A549 (cell line): ENCODE measurements at regions of chr17 and their contacts with region 1.

Region 1: DNA sequence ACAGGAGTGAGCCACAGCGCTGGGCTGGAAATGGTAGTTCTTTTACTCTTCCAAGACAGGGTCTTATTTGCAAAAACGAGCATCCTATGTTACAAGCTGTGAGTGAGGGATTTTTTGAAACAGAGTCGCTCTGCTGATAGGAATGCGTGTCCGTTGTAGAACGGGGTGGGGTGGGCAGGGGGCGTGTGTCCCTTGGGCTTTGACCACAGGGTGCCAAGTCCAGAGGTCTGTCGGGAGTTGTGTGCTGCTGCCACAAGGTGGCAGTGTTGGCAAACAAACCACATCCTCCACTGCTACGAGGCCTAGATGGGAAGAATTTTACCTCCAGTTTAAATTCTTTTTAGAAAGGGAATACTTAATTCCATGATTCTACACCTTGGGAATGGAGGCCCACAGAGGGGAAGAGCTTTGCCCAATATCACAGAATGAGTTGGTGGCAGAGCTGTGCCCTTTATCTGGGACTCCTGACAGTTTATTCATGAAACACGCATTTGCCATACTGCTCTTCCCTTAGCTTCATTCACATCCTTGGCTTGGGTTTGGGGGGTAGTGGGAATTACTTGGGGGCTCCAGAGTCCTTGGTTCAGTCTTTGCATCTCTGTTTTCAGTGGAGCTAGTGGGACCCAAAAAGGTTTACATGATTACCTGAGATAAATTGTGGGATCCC is 30.6 kb upstream of the ETV4 start:
- DNase-seq: peak; percentile 76 to 80
- ATAC-seq: peak; percentile 72 to 88
- H3K4me3 ChIP-seq: no peak overlapping the region
- H3K27ac ChIP-seq: 0 out of 6 replicates have a peak overlapping the region, but pooled peaks of 1 of the 2 experiments have one; percentile 17
- H3K4me1 ChIP-seq: peaks cover 50% of the 10 kb centered on the region
- CTCF ChIP-seq: peak; percentile 99
- EP300 ChIP-seq: no peak
- POLR2A ChIP-seq: no peak
- RAD21 ChIP-seq: peak; percentile 99

Region 2: DNA sequence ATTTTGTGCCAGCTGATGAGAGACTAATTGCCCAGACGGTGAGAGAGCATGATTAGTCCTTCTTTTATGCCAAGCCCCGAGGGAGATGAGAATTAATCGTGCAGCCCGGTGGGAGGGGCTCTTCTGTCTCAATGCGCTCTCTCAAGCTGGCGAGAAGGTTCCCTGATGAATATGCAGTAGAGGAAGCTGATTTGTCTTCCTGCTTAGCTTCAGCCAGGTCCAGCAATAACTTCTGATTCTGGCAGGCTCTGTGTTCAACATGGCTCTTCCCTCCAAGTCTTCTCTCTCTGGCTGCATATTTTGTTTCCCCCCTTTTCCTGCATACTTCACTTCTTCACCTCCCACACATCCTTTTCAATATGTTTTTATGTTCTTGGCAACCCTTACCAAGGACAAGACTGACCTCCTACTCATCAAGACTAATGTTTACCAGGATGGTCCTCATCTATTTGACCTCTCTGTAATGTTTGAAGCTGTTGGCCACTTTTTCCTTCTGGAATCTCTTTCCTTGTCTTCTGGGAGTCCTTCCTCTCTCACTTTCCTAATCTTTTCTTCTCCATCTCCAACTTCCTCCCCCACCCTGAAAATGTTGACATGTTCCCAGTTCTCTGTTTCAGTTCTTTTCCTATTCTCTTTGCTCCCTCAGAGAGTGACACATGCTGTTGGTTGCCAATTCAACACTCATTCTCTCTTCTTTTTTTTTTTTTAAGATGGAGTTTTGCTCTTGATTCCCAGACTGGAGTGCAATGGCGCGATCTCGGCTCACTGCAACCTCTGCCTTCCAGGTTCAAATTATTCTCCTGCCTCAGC is 144.8 kb before region 1 on chr17:
- CTCF ChIA-PET with region 1: no interaction called
- POLR2A ChIA-PET with region 1: no interaction called
- DNase-seq: no peak
- ATAC-seq: peak in 1 of 2 experiments; percentile 14; a peak in 2 of 6 replicates
- H3K4me3 ChIP-seq: no peak overlapping the region
- H3K27ac ChIP-seq: peak overlapping the region in 1 of 2 experiments; percentile 59; a peak in 3 of 6 replicates
- H3K4me1 ChIP-seq: peaks cover 58% of the 10 kb centered on the region
- CTCF ChIP-seq: no peak
- EP300 ChIP-seq: no peak
- POLR2A ChIP-seq: no peak
- RAD21 ChIP-seq: no peak

Region 3: DNA sequence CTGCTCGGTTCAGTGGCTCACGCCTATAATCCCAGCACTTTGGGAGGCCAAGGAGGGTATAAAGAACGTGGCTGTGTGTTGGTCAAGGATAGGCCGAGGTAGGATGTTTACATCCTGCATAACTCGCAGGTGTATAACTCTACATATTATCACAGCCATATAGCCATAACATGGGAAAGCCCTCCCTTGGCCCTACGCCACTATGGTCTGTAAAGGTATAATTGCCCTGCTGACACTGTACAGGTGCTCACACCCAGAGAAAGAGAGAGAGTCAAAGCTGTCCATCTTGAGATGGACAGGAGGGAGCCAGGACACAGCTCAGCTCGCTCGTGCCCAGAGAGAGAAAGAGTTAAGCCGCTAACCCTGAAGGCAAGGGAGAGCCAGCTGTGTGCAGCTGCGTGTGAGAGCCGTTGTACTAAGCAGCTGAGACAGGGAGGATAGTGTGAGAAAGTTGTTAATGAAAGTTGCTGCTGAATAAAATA is 123.3 kb before region 1 on chr17:
- CTCF ChIA-PET with region 1: no interaction called
- POLR2A ChIA-PET with region 1: no interaction called
- DNase-seq: no peak
- ATAC-seq: no peak
- H3K4me3 ChIP-seq: no peak overlapping the region
- H3K27ac ChIP-seq: peak overlapping the region; percentile 0 to 3; a peak in 2 of 6 replicates
- H3K4me1 ChIP-seq: peaks cover 50% of the 10 kb centered on the region
- CTCF ChIP-seq: no peak
- EP300 ChIP-seq: no peak
- POLR2A ChIP-seq: no peak
- RAD21 ChIP-seq: no peak

Region 4: GRCh38 chr17:43530278-43531081 is 46.2 kb before region 1 on chr17:
- CTCF ChIA-PET with region 1: interaction called, 57 read pairs
- POLR2A ChIA-PET with region 1: no interaction called
- DNase-seq: no peak
- ATAC-seq: peak in 1 of 2 experiments; percentile 7; a peak in 2 of 6 replicates
- H3K4me3 ChIP-seq: no peak overlapping the region
- H3K27ac ChIP-seq: peak overlapping the region in 1 of 2 experiments; percentile 48; a peak in 2 of 6 replicates
- H3K4me1 ChIP-seq: peaks cover 31% of the 10 kb centered on the region
- CTCF ChIP-seq: no peak
- EP300 ChIP-seq: no peak
- POLR2A ChIP-seq: no peak
- RAD21 ChIP-seq: no peak

Region 5: GRCh38 chr17:43556292-43556691 is 20.4 kb before region 1 on chr17:
- CTCF ChIA-PET with region 1: interaction called, 88 read pairs
- POLR2A ChIA-PET with region 1: no interaction called
- DNase-seq: peak; percentile 95 to 96
- ATAC-seq: peak; percentile 67 to 91
- H3K4me3 ChIP-seq: no peak overlapping the region
- H3K27ac ChIP-seq: peak overlapping the region; percentile 64 to 85
- H3K4me1 ChIP-seq: peaks cover 56% of the 10 kb centered on the region
- CTCF ChIP-seq: no peak
- EP300 ChIP-seq: no peak
- POLR2A ChIP-seq: no peak
- RAD21 ChIP-seq: no peak

Region 6: DNA sequence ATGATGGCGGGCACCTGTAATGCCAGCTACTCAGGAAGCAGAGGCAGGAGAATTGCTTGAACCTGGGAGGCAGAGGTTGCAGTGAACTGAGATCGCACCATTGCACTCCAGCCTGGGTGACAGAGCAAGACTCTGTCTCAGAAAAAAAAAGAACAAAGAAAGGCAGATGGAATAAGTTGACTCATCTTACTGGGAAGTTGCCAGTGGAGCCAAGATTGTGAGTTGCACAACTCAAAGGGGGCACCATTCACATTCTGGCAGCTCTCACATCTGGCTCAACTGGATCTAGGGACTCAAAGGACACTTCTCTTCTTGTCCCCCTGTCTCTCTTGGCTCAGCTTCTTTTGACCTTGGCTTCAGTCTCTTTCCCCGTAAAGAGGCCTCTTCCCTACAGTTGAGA is 23.1 kb after region 1 on chr17:
- CTCF ChIA-PET with region 1: interaction called, 55 read pairs
- POLR2A ChIA-PET with region 1: no interaction called
- DNase-seq: peak in 1 of 2 experiments; percentile 52
- ATAC-seq: peak; percentile 46 to 52; a peak in 1 of 6 replicates
- H3K4me3 ChIP-seq: no peak overlapping the region
- H3K27ac ChIP-seq: peak overlapping the region in 1 of 2 experiments; percentile 49; a peak in 3 of 6 replicates
- H3K4me1 ChIP-seq: peaks cover 19% of the 10 kb centered on the region
- CTCF ChIP-seq: no peak
- EP300 ChIP-seq: no peak
- POLR2A ChIP-seq: no peak
- RAD21 ChIP-seq: no peak

Region 7: DNA sequence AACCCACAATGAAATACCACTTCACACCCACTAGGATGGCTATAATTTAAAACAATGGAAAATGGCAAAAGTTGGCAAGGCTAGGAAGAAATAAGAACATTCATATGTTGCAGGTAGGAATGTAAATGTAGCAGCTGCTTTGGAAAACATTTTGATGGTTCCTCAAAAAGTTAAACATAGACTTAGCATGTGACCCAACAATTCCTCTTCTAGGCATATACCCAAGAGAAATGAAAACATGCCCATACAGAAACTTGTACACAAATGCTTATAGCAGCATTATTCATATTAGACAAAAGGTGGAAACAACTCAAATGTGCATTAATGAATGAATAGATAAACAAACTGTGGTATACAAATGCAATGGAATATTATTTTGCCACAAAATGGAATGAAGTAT is 48.9 kb after region 1 on chr17:
- CTCF ChIA-PET with region 1: interaction called, 207 read pairs
- POLR2A ChIA-PET with region 1: no interaction called
- DNase-seq: no peak
- ATAC-seq: no peak
- H3K4me3 ChIP-seq: no peak overlapping the region
- H3K27ac ChIP-seq: no peak overlapping the region
- H3K4me1 ChIP-seq: no peaks in the 10 kb centered on the region
- CTCF ChIP-seq: no peak
- EP300 ChIP-seq: no peak
- POLR2A ChIP-seq: no peak
- RAD21 ChIP-seq: no peak

Region 8: DNA sequence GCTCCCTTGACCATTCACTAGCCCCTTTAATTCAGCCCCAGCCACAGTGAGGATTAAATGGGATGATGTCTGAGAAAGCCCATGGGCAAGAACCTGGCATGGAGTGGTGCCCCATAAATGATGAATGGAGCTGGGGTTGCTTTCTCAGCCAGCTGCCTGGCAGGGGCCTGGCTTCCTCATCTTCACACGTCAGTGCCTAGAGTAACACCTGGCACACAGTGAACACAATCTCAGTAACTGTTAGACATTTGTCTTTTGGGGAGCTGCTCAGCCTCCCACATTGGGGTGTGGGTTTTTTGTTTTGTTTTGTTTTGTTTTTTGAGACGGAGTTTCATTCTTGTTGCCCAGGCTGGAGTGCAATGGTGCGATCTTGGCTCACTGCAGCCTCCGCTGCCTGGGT is 132.5 kb after region 1 on chr17:
- CTCF ChIA-PET with region 1: interaction called, 15 read pairs
- POLR2A ChIA-PET with region 1: no interaction called
- DNase-seq: no peak
- ATAC-seq: no peak
- H3K4me3 ChIP-seq: no peak overlapping the region
- H3K27ac ChIP-seq: no peak overlapping the region
- H3K4me1 ChIP-seq: peaks cover 8% of the 10 kb centered on the region
- CTCF ChIP-seq: no peak
- EP300 ChIP-seq: no peak
- POLR2A ChIP-seq: no peak
- RAD21 ChIP-seq: no peak

Region 9: DNA sequence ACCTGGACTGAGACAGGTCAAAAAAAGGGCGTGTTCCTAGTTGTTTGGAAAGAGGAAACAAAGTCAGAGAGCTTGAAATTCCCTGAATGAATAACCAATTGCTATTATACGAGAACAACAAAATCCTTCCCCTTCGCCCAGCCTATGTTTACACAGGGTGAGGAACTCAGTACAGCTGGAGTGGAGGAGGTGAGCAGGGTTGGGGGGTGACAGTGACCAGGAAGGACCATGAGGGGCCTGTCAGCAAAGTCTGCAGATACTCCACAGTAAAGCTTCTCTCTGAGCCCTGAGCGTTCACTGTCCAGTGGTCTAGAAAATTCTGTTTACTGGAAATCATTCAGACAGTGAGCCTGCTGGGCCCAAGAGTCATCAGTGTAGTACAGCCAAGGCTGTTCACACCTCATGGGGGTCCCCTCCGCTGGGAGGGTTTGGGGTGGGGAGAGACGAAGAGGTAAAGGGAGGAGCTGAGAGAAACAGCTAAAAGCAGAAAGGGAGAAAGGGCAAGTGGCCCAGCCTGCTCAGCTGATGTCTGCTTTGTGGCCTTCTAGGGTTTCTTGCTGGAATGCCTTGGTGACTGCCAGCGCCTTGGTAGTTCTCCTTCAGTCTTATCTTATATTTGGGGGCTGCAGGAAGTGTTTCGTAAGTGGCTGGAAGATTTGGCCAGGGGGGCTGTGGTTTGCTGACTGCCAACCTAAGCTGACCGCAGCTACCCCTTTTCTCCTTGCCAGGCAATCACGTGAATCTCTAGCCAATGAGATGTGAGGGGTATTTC is 196.4 kb after region 1 on chr17:
- CTCF ChIA-PET with region 1: interaction called, 220 read pairs
- POLR2A ChIA-PET with region 1: no interaction called
- DNase-seq: no peak
- ATAC-seq: no peak
- H3K4me3 ChIP-seq: no peak overlapping the region
- H3K27ac ChIP-seq: no peak overlapping the region
- H3K4me1 ChIP-seq: peaks cover 28% of the 10 kb centered on the region
- CTCF ChIP-seq: no peak
- EP300 ChIP-seq: no peak
- POLR2A ChIP-seq: no peak
- RAD21 ChIP-seq: no peak

Region 10: GRCh38 chr17:43810226-43810715 is 233.6 kb after region 1 on chr17:
- CTCF ChIA-PET with region 1: no interaction called
- POLR2A ChIA-PET with region 1: no interaction called
- DNase-seq: no peak
- ATAC-seq: no peak
- H3K4me3 ChIP-seq: no peak overlapping the region
- H3K27ac ChIP-seq: no peak overlapping the region
- H3K4me1 ChIP-seq: peaks cover 13% of the 10 kb centered on the region
- CTCF ChIP-seq: no peak
- EP300 ChIP-seq: no peak
- POLR2A ChIP-seq: no peak
- RAD21 ChIP-seq: no peak